GM13976 (cell line): ENCODE measurements at regions of chr1 and their contacts with region 1.

Region 1: GRCh38 chr1:235783148-235783776 is 83.4 kb downstream of the LYST start:
- DNase-seq: peak; percentile 12
- CTCF ChIP-seq: no peak

Region 2: GRCh38 chr1:235105051-235106043 is 677.9 kb before region 1 on chr1:
- in situ Hi-C with region 1: loop called (anchors 25 kb)
- DNase-seq: peak; percentile 75
- CTCF ChIP-seq: no peak

Region 3: DNA sequence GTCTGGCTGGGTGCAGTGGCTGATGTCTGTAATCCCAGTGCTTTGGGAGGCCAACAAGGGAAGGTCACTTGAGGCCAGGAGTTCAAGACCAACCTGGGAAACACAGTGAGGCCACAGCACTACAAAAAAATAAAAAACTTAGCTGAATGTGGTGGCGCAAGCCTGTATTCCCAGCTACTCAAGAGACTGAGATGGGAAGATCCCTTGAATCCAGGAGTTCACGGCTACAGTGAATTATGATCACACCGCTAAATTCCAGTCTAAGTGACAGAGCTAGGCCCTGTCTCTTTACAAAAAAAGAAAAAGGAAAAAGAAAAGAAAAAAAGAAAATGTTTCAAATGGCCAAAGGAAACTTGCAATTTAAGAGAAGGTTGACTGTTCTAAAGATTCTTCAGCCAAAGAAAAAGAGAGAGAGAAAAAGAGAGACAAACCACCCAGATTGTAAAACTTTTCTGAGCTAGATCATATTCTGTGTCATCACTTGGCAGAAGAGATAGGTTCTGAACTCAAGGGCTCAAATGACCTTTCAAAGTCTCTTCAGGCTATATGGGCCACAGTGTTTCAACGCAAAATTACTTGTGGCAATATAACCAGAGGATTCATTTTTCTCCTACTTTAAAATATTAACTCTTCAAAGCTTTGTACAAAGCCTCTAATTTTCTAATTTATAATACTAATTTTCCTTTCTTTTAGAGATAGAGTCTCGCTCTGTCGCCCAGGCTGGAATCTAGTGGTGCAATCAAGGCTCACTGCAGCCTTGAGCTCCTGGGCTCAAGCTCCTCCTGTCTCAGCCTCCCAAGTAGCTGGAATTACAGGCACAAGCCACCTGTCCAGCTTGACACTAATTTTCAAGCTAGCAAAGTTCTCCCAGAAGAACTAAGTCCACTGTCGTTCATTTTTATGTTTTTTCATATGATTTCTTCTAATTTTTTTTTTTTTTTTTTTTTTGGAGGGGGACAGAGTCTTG is 475.8 kb before region 1 on chr1:
- in situ Hi-C with region 1: no loop called
- DNase-seq: no peak
- CTCF ChIP-seq: no peak

Region 4: DNA sequence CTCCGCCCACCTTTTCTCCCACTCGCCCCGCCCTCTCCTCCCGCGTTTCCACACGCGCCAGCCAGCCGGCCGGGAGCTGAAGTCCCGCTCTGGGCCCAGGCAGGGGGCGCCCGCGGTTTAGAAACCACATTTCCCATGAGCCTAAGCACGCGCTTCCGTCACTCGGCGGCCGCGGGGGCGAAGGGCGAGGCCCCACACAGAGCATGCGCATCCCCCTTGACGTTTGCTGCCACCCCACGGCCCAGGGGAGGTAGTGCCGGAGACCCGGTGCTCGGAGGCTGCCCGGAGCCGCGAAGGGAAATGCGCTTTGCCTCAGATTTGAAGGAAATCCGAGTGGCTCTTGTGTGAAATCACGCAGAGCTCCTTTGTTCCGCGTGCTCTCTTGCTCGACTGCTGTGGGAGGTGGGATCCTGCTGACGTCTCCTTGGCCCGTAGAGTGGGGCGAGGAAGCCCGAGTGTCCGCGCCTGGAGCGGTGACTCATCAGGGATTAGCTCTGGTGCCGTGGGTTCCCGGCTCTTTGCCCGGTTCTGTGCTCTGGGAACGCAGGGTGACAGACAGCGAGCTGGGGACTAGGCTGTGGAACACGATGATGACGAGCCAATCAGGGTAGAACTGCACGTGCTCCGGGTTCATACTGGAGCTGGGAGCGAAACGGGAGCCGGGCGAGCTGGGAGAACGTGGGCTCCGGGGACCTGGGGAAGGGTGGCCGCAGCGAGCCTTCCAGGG is 278.6 kb before region 1 on chr1:
- in situ Hi-C with region 1: loop called (anchors 25 kb)
- DNase-seq: peak; percentile 96
- CTCF ChIP-seq: peak; percentile 82

Region 5: DNA sequence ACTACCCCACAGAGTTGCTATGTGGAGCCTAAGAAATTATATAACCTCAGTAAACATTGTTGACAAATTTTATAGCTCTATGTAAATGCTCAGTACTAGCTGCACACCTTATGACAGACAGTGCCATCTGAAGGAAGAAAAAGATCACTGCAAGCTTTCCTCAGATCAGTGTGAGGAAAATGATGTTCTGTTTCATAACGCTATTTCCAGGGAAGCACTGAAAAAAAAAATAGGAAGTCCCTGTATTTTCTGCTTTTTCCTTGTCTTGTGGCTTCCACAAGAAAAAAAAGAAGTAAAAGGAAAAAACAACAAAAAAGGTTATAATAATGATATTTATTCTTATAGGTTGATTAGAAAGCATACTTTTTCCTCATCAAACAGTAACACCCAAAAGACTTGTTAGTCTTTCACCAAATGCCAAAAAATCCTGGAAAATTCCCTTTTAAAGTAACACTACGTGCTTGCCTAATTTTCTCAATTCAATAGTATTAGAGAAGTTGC is 60.2 kb after region 1 on chr1:
- in situ Hi-C with region 1: no loop called
- DNase-seq: peak; percentile 18
- CTCF ChIP-seq: peak; percentile 31